Endothelial cell of umbilical vein (primary cell): ENCODE measurements at regions of chr11 and their contacts with region 1.

Region 1: GRCh38 chr11:111841370-111842053 is 29.9 kb downstream of the ALG9 start:
- DNase-seq: peak; percentile 86
- H3K4me3 ChIP-seq: no peak overlapping the region
- H3K27ac ChIP-seq: no peak overlapping the region
- H3K4me1 ChIP-seq: peaks cover 10% of the 10 kb centered on the region
- H3K27me3 ChIP-seq: no peaks in the 10 kb centered on the region
- CTCF ChIP-seq: peak; percentile 76 to 84
- POLR2A ChIP-seq: no peak

Region 2: GRCh38 chr11:111269146-111269868 is 572.2 kb before region 1 on chr11:
- CTCF ChIA-PET with region 1: no interaction called
- POLR2A ChIA-PET with region 1: no interaction called
- dilution Hi-C with region 1: no loop called
- intact Hi-C with region 1: no loop called
- DNase-seq: no peak
- H3K4me3 ChIP-seq: no peak overlapping the region
- H3K27ac ChIP-seq: no peak overlapping the region
- H3K4me1 ChIP-seq: no peaks in the 10 kb centered on the region
- H3K27me3 ChIP-seq: no peaks in the 10 kb centered on the region
- CTCF ChIP-seq: no peak
- POLR2A ChIP-seq: no peak

Region 3: DNA sequence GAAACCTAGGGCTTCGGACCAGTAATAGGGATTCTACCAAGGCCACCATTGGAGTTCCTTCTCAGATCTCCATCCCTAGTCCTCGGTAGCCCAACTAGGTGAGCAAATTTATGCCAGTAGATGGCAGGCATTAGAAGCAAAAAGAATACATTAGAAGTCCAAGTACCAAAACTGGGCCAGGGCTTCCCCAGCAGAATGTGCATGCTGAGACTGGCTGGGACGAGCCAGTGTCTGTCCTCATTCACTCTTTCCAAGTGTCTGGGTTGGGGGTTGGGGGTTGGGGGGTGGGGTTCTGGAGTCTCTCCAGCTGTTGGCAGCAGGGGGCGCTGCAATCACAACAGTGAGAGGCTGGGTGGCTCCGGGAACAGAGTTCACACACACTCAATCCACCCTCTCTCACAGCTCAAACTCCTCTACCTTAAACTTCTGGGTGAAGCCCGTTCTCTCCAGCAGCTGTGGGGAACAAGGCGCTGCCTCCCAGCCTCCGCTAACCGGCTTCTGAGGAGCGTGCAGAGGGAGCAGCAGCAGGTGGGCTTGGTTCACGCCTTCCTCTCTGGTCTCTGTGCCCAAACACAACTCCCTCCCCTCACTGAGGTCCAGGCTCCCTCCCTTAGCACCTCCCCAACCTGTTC is 386.8 kb before region 1 on chr11:
- CTCF ChIA-PET with region 1: interaction called, 5 read pairs
- POLR2A ChIA-PET with region 1: no interaction called
- dilution Hi-C with region 1: no loop called
- intact Hi-C with region 1: loop called (anchors 1 kb)
- DNase-seq: peak; percentile 8
- H3K4me3 ChIP-seq: no peak overlapping the region
- H3K27ac ChIP-seq: no peak overlapping the region
- H3K4me1 ChIP-seq: no peaks in the 10 kb centered on the region
- H3K27me3 ChIP-seq: no peaks in the 10 kb centered on the region
- CTCF ChIP-seq: peak; percentile 9 to 55
- POLR2A ChIP-seq: no peak

Region 4: GRCh38 chr11:111565114-111565720 is 276.3 kb before region 1 on chr11:
- CTCF ChIA-PET with region 1: interaction called, 11 read pairs
- POLR2A ChIA-PET with region 1: interaction called, 3 read pairs
- dilution Hi-C with region 1: no loop called
- intact Hi-C with region 1: loop called (anchors 1 kb)
- DNase-seq: peak; percentile 77
- H3K4me3 ChIP-seq: no peak overlapping the region
- H3K27ac ChIP-seq: no peak overlapping the region
- H3K4me1 ChIP-seq: no peaks in the 10 kb centered on the region
- H3K27me3 ChIP-seq: no peaks in the 10 kb centered on the region
- CTCF ChIP-seq: peak; percentile 62 to 74
- POLR2A ChIP-seq: no peak

Region 5: GRCh38 chr11:111586388-111586831 is 255.1 kb before region 1 on chr11:
- CTCF ChIA-PET with region 1: interaction called, 33 read pairs
- POLR2A ChIA-PET with region 1: interaction called, 6 read pairs
- dilution Hi-C with region 1: no loop called
- intact Hi-C with region 1: loop called (anchors 1 kb)
- DNase-seq: peak; percentile 59
- H3K4me3 ChIP-seq: no peak overlapping the region
- H3K27ac ChIP-seq: no peak overlapping the region
- H3K4me1 ChIP-seq: peaks cover 8% of the 10 kb centered on the region
- H3K27me3 ChIP-seq: peaks cover 0 to 2% of the 10 kb centered on the region in 2 experiments
- CTCF ChIP-seq: peak; percentile 38 to 49
- POLR2A ChIP-seq: no peak

Region 6: GRCh38 chr11:111851636-111852035 is 10.1 kb after region 1 on chr11:
- CTCF ChIA-PET with region 1: interaction called, 11 read pairs
- POLR2A ChIA-PET with region 1: no interaction called
- dilution Hi-C with region 1: no loop called
- intact Hi-C with region 1: no loop called
- DNase-seq: peak; percentile 18
- H3K4me3 ChIP-seq: no peak overlapping the region
- H3K27ac ChIP-seq: no peak overlapping the region
- H3K4me1 ChIP-seq: peaks cover 2% of the 10 kb centered on the region
- H3K27me3 ChIP-seq: no peaks in the 10 kb centered on the region
- CTCF ChIP-seq: peak in 1 of 2 donors; percentile 23
- POLR2A ChIP-seq: no peak